ENCODE measurements at regions of chr19 and their contacts with region 1.

Region 1: DNA sequence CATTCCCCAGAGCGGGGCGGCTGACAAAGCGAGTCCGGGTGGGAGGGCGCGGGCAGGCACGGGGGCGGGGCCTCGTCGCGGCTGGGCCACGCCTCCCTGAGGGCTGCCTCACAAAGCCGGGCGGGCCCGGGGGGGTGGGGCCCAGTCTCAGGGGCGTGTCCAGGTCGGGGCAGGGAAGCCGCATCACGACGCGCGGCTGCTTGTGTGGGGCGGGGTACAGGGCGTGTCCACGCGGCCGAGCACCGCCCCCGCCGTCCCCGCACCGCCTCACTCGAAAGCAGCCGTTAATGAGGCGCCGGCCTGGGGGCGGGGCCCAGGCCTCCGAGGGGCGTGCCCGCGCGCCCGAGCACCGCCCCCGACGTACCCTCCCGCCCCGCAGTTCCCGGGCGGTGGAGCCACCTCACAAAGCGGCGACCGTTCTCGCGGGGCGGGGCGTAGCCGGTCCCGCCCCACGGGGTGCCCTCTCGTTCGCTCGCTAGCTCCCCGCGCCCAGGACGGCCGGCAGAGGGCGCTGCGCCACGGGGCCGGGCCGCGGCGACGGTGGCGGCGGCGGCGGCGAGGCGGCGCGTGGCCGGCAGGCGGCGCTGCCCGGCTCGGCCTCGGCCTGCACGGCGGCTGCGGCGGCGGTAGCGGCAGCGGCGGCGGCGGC is at the start of gene CARM1:
- DNase-seq: peak in 1 of 2 experiments; percentile 99
- H3K4me3 ChIP-seq: peak within 1 kb of the TSS; percentile 65 to 94 (median 76)
- H3K27ac ChIP-seq: peak within 1 kb of the TSS; percentile 86
- H3K4me1 ChIP-seq: peaks cover 0 to 12% (median 2%) of the 10 kb centered on the region in 4 experiments; a peak in 5 of 7 replicates
- H3K27me3 ChIP-seq: no peaks in the 10 kb centered on the region
- CTCF ChIP-seq: peak; percentile 72 to 97 (median 95)
- EP300 ChIP-seq: peak in 1 of 2 experiments; percentile 46; a peak in 1 of 3 replicates
- POLR2A ChIP-seq: no peak
- RAD21 ChIP-seq: peak; percentile 37 to 70; a peak in 3 of 4 replicates
- total RNA-seq, gene CARM1: 134 and 136 TPM in 2 replicates

Region 2: GRCh38 chr19:10780368-10780767 is 90.7 kb before region 1 on chr19:
- CTCF ChIA-PET with region 1: no interaction called
- POLR2A ChIA-PET with region 1: no interaction called
- DNase-seq: no peak
- H3K4me3 ChIP-seq: no peak overlapping the region
- H3K27ac ChIP-seq: no peak overlapping the region
- H3K4me1 ChIP-seq: no peaks in the 10 kb centered on the region
- H3K27me3 ChIP-seq: no peaks in the 10 kb centered on the region
- CTCF ChIP-seq: no peak
- EP300 ChIP-seq: no peak
- POLR2A ChIP-seq: no peak
- RAD21 ChIP-seq: no peak

Region 3: DNA sequence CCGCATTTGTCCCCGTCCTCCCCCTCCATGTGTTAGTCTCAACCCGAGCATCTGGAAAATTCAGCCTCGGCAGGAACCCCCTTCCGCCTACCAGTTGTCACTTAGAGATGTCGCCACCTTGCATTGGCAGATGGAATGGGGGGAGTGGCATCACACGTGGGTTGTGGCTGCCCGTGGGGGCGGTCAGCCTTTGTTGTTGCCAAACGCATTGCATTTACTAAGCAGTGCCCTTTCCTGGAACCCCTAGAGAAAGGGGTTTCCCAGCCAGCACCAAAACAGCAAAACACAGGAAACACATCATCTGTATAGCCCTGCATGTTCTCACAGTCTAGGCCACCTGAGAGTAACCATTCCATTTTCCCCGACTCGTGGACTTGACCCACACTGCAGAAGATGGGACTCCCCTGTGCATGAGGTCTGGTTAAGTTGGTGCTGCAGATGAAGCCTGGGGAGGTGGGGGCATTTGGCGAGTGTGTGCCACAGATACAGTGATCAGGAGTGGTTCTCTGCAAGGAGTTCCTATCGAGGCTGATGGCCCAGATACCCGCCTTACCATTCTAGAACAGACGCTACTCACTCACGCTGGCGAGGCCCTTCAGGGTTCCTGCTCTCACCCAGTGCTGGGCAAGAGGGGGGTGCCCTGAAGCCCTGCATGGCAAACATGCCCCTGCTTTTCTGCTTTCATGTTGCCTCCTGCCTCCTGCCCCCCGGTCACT is 73.4 kb before region 1 on chr19:
- CTCF ChIA-PET with region 1: no interaction called
- POLR2A ChIA-PET with region 1: no interaction called
- DNase-seq: no peak
- H3K4me3 ChIP-seq: no peak overlapping the region
- H3K27ac ChIP-seq: no peak overlapping the region
- H3K4me1 ChIP-seq: no peaks in the 10 kb centered on the region
- H3K27me3 ChIP-seq: no peaks in the 10 kb centered on the region
- CTCF ChIP-seq: no peak
- EP300 ChIP-seq: no peak
- POLR2A ChIP-seq: no peak
- RAD21 ChIP-seq: no peak

Region 4: DNA sequence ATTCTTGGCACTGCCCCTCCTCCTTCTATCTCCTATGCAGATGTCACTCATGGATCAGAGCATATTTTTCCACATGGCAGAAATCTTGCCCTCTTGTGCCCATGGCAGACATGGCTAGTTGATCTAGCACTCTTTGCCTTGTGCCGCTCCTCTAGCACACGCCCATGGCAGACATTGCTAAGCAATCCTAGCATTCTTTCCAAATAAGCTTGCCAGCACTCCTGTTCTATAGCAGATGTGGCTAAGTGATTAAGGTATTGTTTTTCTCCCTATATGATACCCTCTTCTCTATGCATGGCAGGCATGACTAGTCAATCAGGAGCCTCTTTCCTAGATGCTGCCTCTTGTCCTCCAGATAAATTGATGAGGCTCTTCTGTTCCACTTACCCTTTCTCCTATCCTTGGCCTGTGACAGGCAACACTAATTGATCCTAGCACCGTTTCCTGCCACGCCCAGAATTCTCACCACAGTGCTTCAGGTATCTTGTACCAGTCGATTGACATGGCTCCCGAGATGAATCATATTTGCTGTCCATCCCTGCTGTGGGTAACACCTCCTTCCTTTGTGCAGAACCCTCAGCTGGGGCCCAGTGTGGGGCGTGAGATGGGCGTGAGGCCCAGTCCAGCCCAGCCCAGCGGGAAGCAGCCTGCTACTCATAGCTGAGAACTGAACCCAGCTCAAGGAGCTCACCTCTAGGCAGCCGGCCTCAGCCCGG is 62.0 kb before region 1 on chr19:
- CTCF ChIA-PET with region 1: no interaction called
- POLR2A ChIA-PET with region 1: no interaction called
- DNase-seq: no peak
- H3K4me3 ChIP-seq: no peak overlapping the region
- H3K27ac ChIP-seq: no peak overlapping the region; the same call in 1 of the 2 replicates
- H3K4me1 ChIP-seq: no peaks in the 10 kb centered on the region
- H3K27me3 ChIP-seq: no peaks in the 10 kb centered on the region
- CTCF ChIP-seq: no peak
- EP300 ChIP-seq: no peak
- POLR2A ChIP-seq: no peak
- RAD21 ChIP-seq: no peak

Region 5: GRCh38 chr19:10884274-10884673 is 13.2 kb after region 1 on chr19:
- CTCF ChIA-PET with region 1: interaction called, 103 read pairs
- POLR2A ChIA-PET with region 1: interaction called, 72 read pairs
- DNase-seq: no peak
- H3K4me3 ChIP-seq: no peak overlapping the region
- H3K27ac ChIP-seq: no peak overlapping the region
- H3K4me1 ChIP-seq: peaks cover 26 to 63% (median 53%) of the 10 kb centered on the region in 4 experiments
- H3K27me3 ChIP-seq: no peaks in the 10 kb centered on the region
- CTCF ChIP-seq: no peak
- EP300 ChIP-seq: no peak
- POLR2A ChIP-seq: no peak
- RAD21 ChIP-seq: no peak

Region 6: DNA sequence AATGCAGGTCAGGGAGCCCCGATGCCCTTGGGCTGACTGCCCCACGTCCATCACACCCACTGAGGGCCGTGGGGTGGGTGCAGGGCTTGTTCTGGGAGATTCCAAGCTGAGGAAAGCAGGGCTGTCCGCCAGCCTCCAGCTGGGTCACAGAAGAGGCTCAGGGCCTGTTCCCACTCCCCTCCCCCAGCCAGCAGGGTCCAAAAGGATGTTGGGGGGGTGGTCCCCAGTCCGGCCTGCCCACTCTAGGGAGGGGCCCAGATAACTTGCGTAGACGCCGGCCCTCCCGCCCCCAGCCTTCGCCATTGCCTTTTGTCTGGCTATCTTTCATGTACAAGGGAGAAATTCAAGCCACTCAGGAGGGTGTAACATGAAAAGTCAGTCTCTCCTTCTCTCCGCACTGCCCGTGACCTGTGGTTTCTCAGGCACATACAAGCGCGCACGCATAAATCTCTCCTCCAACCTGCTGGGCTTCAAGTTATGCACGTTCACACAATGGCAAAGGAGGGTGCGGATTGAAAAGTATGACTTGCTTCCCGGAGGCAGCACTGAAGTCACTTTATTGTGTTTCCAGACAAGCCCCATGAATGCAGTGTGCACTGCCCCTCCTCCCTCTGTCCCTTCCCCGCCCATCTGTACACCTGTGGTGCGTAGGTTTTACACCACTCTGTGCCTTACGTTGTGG is 20.5 kb after region 1 on chr19:
- CTCF ChIA-PET with region 1: interaction called, 103 read pairs
- POLR2A ChIA-PET with region 1: interaction called, 72 read pairs
- DNase-seq: no peak
- H3K4me3 ChIP-seq: no peak overlapping the region
- H3K27ac ChIP-seq: no peak overlapping the region; the same call in 1 of the 2 replicates
- H3K4me1 ChIP-seq: peaks cover 19 to 55% (median 45%) of the 10 kb centered on the region in 4 experiments
- H3K27me3 ChIP-seq: no peaks in the 10 kb centered on the region
- CTCF ChIP-seq: no peak
- EP300 ChIP-seq: no peak
- POLR2A ChIP-seq: no peak
- RAD21 ChIP-seq: no peak

Region 7: GRCh38 chr19:10899151-10899653 is 28.1 kb after region 1 on chr19:
- CTCF ChIA-PET with region 1: interaction called, 11 read pairs
- POLR2A ChIA-PET with region 1: interaction called, 8 read pairs
- DNase-seq: no peak
- H3K4me3 ChIP-seq: no peak overlapping the region
- H3K27ac ChIP-seq: peak overlapping the region; percentile 45; the same call in 1 of the 2 replicates
- H3K4me1 ChIP-seq: peaks cover 5 to 10% (median 8%) of the 10 kb centered on the region in 4 experiments
- H3K27me3 ChIP-seq: no peaks in the 10 kb centered on the region
- CTCF ChIP-seq: no peak
- EP300 ChIP-seq: no peak
- POLR2A ChIP-seq: no peak
- RAD21 ChIP-seq: no peak